Sigmoid colon (tissue), 7 donors: ENCODE measurements at regions of chr16 and their contacts with region 1.

Region 1: GRCh38 chr16:57535680-57536305 is 578 bp downstream of the CCDC102A start:
- DNase-seq: peak; percentile 97
- H3K4me3 ChIP-seq: peak overlapping the region; percentile 72 to 87 (median 78)
- H3K27ac ChIP-seq: peak overlapping the region; percentile 88 to 94 (median 90)
- H3K4me1 ChIP-seq: peaks cover 0 to 56% (median 50%) of the 10 kb centered on the region in 4 donors
- H3K27me3 ChIP-seq: no peaks in the 10 kb centered on the region
- CTCF ChIP-seq: peak in 1 of 4 experiments; percentile 14
- EP300 ChIP-seq: no peak
- POLR2A ChIP-seq: peak in 1 of 2 donors; percentile 15

Region 2: GRCh38 chr16:57185944-57186871 is 349.6 kb before region 1 on chr16 and contains the starts of genes PSME3IP1 and RSPRY1:
- intact Hi-C with region 1: loop called (anchors 10 kb)
- DNase-seq: peak; percentile 99
- H3K4me3 ChIP-seq: peak within 1 kb of the TSS; percentile 88 to 99 (median 96)
- H3K27ac ChIP-seq: peak within 1 kb of the TSS; percentile 97 to 99 (median 98)
- H3K4me1 ChIP-seq: peaks cover 0 to 57% (median 42%) of the 10 kb centered on the region in 4 donors
- H3K27me3 ChIP-seq: no peaks in the 10 kb centered on the region
- CTCF ChIP-seq: no peak
- EP300 ChIP-seq: no peak
- POLR2A ChIP-seq: peak; percentile 81 to 83
- total RNA-seq, gene PSME3IP1: 60.1 to 81.3 (median 76.9) TPM
- total RNA-seq, gene RSPRY1: 30.6 to 42.7 (median 34.1) TPM

Region 3: DNA sequence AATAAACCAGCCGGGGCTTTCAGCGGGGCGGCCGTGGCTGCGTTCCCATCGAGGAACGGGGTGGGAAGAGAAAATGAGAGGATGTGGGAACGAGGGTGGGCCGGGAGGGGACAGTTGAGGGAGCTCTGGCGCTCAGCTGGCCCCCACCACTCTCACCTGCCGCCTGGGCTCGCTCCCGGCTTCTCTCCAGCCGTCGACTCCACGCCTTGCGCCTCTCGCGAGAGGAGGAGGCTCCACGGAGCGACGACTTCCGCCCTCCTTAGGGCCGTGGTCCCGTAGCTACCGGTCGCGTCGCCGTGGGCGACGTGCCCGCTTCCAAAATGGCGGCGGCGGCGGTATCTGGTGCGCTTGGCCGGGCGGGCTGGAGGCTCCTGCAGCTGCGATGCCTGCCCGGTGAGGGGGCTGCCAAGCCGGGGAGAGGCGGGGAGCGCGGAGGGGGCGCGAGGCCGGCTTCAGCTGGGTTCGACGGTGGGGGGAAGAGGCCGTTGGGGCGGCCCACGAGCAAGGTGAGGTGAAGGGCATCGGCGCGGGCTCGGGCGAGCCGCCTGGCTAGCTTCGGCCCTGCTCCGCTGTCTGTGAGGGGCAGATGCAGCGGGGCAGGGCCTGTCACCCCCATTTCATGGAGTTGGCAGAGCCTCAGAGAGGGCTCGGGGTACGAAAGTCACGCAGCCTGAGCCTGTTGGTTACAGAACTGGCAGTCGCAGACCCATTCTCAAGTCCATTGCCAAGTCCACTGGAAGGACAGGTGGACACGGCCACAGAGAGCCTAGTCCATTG is 88.4 kb before region 1 on chr16 and contains the starts of genes CIAPIN1 and COQ9:
- intact Hi-C with region 1: loop called (anchors 2 kb)
- DNase-seq: peak; percentile 98
- H3K4me3 ChIP-seq: peak within 1 kb of the TSS; percentile 81 to 99 (median 96)
- H3K27ac ChIP-seq: peak within 1 kb of the TSS; percentile 89 to 97 (median 94)
- H3K4me1 ChIP-seq: peaks cover 0 to 31% (median 19%) of the 10 kb centered on the region in 4 donors
- H3K27me3 ChIP-seq: no peaks in the 10 kb centered on the region
- CTCF ChIP-seq: no peak
- EP300 ChIP-seq: no peak
- POLR2A ChIP-seq: peak; percentile 89 to 91
- total RNA-seq, gene CIAPIN1: 17.1 to 22.5 (median 20.1) TPM
- total RNA-seq, gene COQ9: 61.4 to 74.5 (median 71.3) TPM

Region 4: GRCh38 chr16:57485916-57486857 is 49.6 kb before region 1 on chr16 and contains the start of gene DOK4:
- intact Hi-C with region 1: loop called (anchors 2 kb)
- DNase-seq: peak; percentile 88
- H3K4me3 ChIP-seq: peak within 1 kb of the TSS; percentile 62 to 70 (median 64)
- H3K27ac ChIP-seq: peak within 1 kb of the TSS; percentile 51 to 73 (median 64)
- H3K4me1 ChIP-seq: peaks cover 0 to 22% (median 13%) of the 10 kb centered on the region in 4 donors
- H3K27me3 ChIP-seq: no peaks in the 10 kb centered on the region
- CTCF ChIP-seq: no peak
- EP300 ChIP-seq: no peak
- POLR2A ChIP-seq: no peak
- total RNA-seq, gene DOK4: 3.9 to 21.8 (median 10.1) TPM

Region 5: GRCh38 chr16:57734925-57735754 is 199.3 kb after region 1 on chr16:
- intact Hi-C with region 1: no loop called
- DNase-seq: peak; percentile 99
- H3K4me3 ChIP-seq: peak overlapping the region; percentile 83 to 97 (median 93)
- H3K27ac ChIP-seq: peak overlapping the region; percentile 88 to 93 (median 90)
- H3K4me1 ChIP-seq: peaks cover 0 to 23% (median 18%) of the 10 kb centered on the region in 4 donors
- H3K27me3 ChIP-seq: no peaks in the 10 kb centered on the region
- CTCF ChIP-seq: no peak
- EP300 ChIP-seq: no peak
- POLR2A ChIP-seq: peak; percentile 32 to 44

Region 6: DNA sequence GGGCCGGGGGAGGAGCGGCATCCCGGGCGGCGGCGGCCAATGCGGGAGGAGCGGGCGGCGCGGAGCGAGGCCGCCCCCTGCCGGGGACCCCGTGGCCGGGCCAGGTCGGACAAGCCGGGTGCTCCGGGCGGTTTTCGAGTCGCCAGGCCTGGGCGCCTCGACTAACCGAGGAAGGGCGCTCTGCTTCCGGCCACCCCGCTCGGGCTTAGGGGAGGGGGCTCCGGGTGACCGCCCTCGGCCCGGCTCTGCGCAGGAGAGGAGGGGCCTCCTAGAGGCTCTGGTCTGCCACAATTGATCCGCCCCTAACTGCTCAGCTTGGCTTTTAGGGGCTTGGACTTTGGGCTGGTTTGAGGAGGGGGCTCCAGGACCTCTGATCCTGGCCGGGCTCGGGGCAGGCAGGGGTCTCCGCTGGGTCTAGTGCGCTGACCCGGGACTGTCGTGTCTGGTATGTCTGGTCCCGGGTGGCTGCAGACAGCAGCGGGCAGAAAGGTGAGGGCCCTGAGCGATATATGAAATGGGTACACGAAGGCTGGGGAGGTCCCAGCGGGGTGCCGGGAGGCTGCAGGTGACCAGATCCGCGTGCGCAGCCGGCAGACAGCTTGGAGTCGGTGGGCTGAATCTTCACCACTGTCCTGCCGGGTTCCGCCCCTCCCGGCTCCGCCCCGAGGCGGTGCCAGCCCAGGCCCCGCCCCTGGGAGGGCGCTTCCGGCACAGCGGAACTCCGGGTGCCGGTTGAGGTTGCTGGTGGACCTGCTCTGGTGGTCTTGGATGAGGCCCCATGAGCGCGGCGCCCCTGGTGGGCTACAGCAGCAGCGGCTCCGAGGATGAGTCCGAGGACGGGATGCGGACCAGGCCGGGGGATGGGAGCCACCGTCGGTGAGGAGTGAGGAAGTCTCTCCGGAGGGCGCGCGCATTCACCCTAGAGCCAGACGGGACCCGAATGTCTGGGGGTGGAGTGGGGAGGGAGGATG is 465.2 kb after region 1 on chr16 and contains the start of gene USB1:
- intact Hi-C with region 1: loop called (anchors 10 kb)
- DNase-seq: peak; percentile 92
- H3K4me3 ChIP-seq: peak within 1 kb of the TSS; percentile 48 to 91 (median 82)
- H3K27ac ChIP-seq: peak within 1 kb of the TSS; percentile 93 to 98 (median 96)
- H3K4me1 ChIP-seq: peaks cover 0 to 45% (median 30%) of the 10 kb centered on the region in 4 donors
- H3K27me3 ChIP-seq: no peaks in the 10 kb centered on the region
- CTCF ChIP-seq: peak in 3 of 4 experiments; percentile 22 to 63 (median 58)
- EP300 ChIP-seq: no peak
- POLR2A ChIP-seq: peak; percentile 69 to 79
- total RNA-seq, gene USB1: 19.9 to 44.9 (median 34.9) TPM